SK-N-SH (cell line): ENCODE measurements at regions of chr17 and their contacts with region 1.

Region 1: GRCh38 chr17:68777243-68777855 is 176.2 kb upstream of the FAM20A start:
- DNase-seq: peak; percentile 48
- H3K4me3 ChIP-seq: no peak overlapping the region; a peak in 1 of 4 replicates
- H3K27ac ChIP-seq: no peak overlapping the region
- H3K4me1 ChIP-seq: peaks cover 2 to 15% of the 10 kb centered on the region in 2 experiments
- H3K27me3 ChIP-seq: no peaks in the 10 kb centered on the region; the same call in 1 of the 2 replicates
- CTCF ChIP-seq: peak; percentile 90
- EP300 ChIP-seq: no peak
- RAD21 ChIP-seq: peak; percentile 83

Region 2: DNA sequence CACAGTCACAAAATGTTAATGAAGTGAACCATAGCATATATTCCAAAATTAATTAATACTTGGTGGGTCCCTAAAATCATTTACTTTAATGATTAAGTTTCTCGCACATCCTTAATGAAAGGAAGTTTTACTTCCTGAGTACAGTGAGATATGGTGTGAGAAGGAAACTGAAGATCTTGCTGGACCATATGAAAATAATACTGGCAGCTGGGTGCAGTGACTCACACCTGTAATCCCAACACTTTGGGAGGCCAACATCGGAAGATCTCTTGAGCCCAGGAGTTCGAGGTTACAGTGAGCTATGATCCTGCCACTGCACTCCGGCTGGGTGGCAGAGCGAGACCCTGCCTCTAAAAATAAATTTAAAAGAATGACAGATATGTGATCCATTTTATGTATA is 115.3 kb after region 1 on chr17:
- CTCF ChIA-PET with region 1: no interaction called
- POLR2A ChIA-PET with region 1: no interaction called
- DNase-seq: no peak
- H3K4me3 ChIP-seq: no peak overlapping the region
- H3K27ac ChIP-seq: no peak overlapping the region
- H3K4me1 ChIP-seq: no peaks in the 10 kb centered on the region
- H3K27me3 ChIP-seq: no peaks in the 10 kb centered on the region
- CTCF ChIP-seq: no peak
- EP300 ChIP-seq: no peak
- RAD21 ChIP-seq: no peak

Region 3: DNA sequence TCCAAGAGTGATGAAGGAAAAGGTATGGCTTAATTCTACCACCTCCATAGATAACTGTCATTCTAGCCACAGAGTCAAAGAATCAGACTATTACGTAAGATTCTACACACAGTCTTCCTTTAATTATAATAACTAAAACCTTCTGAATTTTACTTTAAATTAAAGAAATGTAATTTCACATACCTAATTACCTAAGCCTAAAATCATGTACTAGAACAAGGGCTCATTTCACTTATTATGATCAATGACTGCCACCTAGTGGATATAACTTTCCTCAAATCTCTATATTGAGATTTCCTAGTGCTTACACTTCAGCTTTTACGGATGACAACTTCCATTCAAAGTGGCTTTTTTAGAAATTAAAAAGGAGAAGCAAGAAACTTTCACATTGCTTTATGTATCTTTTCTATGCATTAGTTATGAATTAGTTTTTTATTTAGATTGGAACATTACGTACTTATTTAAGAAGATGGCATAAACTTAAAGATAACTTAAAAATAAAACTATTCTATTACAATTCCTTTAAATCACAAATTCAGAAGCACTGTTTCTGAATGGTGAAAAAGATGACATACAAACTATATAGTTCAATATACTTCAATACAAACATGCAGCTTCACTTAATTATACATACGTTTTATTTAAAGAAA is 469.5 kb after region 1 on chr17:
- CTCF ChIA-PET with region 1: interaction called, 185 read pairs
- POLR2A ChIA-PET with region 1: no interaction called
- DNase-seq: peak; percentile 39
- H3K4me3 ChIP-seq: no peak overlapping the region; a peak in 1 of 4 replicates
- H3K27ac ChIP-seq: no peak overlapping the region
- H3K4me1 ChIP-seq: peaks cover 0 to 4% of the 10 kb centered on the region in 2 experiments; a peak in 1 of 4 replicates
- H3K27me3 ChIP-seq: no peaks in the 10 kb centered on the region
- CTCF ChIP-seq: peak; percentile 95
- EP300 ChIP-seq: no peak
- RAD21 ChIP-seq: peak; percentile 80